ENCODE measurements at regions of chr1 and their contacts with region 1.

Region 1: DNA sequence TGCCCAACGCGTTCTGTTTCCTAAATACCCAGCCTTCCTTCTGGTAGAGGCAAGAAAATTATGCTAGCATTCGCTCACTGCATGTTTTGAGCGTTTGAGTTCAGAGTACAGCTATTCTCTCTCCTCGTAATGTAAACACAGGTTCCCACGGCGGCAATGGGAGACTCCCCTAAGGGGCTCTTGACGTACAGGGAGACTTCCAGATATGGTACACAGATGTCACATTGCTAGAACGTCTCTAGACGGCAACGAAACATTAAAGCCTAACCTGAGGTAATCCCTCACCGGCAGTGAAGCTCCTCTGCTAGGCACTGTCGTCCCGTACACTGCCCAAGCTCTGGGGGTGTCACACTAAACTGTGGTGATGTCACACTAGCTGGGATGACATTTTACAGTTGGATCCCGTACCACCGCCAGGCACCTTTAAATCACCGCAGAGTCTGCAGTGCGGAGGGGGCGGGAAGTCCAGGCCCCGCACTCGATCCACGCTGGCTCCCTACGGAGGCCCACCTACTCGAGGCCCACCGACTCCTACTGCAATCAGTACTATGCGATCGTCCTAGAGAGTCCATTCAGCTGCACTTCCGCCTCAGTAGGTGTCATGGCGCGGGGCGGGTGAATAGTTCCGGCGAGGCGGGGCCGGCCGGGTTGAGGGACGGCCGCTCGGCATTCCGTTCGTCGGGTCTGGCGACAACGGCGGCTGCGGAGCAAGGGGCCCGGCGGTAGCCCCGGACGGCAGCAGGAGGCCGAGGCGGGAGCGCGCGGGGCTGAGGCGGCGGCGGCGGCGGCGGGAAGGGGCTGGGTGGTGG is at the start of gene HIPK1:
- DNase-seq: peak; percentile 95
- ATAC-seq: peak; percentile 68
- H3K4me3 Mint-ChIP-seq: peak within 1 kb of the TSS; percentile 90
- H3K27ac Mint-ChIP-seq: peak within 1 kb of the TSS; percentile 100
- H3K4me1 Mint-ChIP-seq: peaks cover 33% of the 10 kb centered on the region
- H3K27me3 Mint-ChIP-seq: no peaks in the 10 kb centered on the region
- CTCF ChIP-seq: no peak
- total RNA-seq, gene HIPK1: 42.8 to 45.1 TPM

Region 2: DNA sequence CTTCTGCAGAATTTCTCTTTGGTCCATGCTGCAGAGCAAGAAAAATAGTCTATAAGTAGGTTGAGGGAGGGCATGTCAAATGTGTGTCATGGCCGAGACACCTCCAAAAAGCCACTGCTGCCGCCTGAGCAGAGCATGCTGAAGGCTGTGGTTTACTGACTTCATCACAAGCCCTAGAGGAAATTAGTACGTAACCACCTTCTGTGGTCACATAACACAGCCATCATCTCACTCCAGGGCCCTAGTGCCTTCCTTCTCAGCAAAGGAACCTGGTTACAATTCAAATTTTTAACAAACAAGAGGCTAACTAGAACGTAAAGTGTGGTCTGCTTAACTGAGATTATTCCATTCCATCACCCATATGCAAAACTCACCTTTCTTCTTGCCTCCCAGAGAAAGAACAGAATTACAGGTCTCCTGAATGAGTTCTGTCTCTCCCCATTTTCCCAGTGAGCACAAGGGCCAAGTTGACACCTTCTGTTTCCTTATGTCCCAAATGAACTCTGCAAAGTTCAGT is 57.5 kb before region 1 on chr1 and contains the start of gene PTPN22:
- CTCF ChIA-PET with region 1: interaction called, 7 read pairs
- POLR2A ChIA-PET with region 1: interaction called, 34 read pairs
- intact Hi-C with region 1: loop called (anchors 5 kb)
- DNase-seq: peak; percentile 91
- ATAC-seq: peak; percentile 79
- H3K4me3 Mint-ChIP-seq: peak within 1 kb of the TSS; percentile 91
- H3K27ac Mint-ChIP-seq: peak within 1 kb of the TSS; percentile 98
- H3K4me1 Mint-ChIP-seq: peaks cover 61% of the 10 kb centered on the region
- H3K27me3 Mint-ChIP-seq: no peaks in the 10 kb centered on the region
- CTCF ChIP-seq: no peak
- total RNA-seq, gene PTPN22: 54.0 to 56.0 TPM

Region 3: GRCh38 chr1:113904674-113905434 is 24.3 kb before region 1 on chr1 and contains the starts of genes AP4B1 and DCLRE1B:
- CTCF ChIA-PET with region 1: interaction called, 55 read pairs
- POLR2A ChIA-PET with region 1: interaction called, 93 read pairs
- intact Hi-C with region 1: loop called (anchors 1 kb)
- DNase-seq: peak; percentile 99
- ATAC-seq: peak; percentile 93
- H3K4me3 Mint-ChIP-seq: peak within 1 kb of the TSS; percentile 88
- H3K27ac Mint-ChIP-seq: peak within 1 kb of the TSS; percentile 99
- H3K4me1 Mint-ChIP-seq: peaks cover 51% of the 10 kb centered on the region
- H3K27me3 Mint-ChIP-seq: no peaks in the 10 kb centered on the region
- CTCF ChIP-seq: no peak
- total RNA-seq, gene AP4B1: 38.2 to 38.5 TPM
- total RNA-seq, gene DCLRE1B: 19.1 to 19.3 TPM

Region 4: DNA sequence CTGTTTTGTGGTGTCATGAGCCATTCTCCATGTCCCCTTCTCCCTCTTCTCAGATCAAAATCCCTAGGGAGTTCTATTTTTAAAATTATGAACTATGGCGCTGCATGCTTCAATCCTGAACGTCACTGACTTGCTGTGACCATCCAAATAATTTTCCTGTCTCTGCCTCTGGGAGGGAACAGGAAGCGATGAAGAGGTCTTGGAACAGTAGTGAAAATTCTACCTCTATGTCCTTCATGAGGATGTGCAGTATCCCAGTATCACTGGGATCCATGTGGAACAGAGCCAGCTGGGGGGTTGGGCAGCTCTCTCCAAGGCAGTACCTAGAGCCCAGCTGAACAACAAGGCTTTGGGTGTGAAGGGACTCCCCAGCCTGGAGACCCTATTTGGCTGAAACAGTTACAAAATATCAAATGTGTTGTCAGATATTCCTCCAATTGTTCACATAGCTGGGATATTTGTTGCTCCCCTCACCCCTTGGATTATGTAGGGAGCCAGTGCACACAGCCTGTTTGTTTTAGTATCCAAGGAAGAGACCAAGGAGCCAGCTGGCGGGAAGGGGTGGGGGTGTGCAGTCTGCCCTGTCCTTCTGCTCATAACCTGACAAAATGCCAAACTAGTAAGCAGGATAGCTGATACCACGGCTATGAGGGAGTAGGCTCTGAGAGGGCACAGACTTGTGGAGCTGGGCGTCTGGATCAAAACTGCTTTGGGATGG is 16.4 kb before region 1 on chr1:
- CTCF ChIA-PET with region 1: interaction called, 55 read pairs
- POLR2A ChIA-PET with region 1: interaction called, 8 read pairs
- intact Hi-C with region 1: no loop called
- DNase-seq: no peak
- ATAC-seq: no peak
- H3K4me3 Mint-ChIP-seq: no peak overlapping the region
- H3K27ac Mint-ChIP-seq: no peak overlapping the region
- H3K4me1 Mint-ChIP-seq: peaks cover 9% of the 10 kb centered on the region
- H3K27me3 Mint-ChIP-seq: no peaks in the 10 kb centered on the region
- CTCF ChIP-seq: no peak

Region 5: DNA sequence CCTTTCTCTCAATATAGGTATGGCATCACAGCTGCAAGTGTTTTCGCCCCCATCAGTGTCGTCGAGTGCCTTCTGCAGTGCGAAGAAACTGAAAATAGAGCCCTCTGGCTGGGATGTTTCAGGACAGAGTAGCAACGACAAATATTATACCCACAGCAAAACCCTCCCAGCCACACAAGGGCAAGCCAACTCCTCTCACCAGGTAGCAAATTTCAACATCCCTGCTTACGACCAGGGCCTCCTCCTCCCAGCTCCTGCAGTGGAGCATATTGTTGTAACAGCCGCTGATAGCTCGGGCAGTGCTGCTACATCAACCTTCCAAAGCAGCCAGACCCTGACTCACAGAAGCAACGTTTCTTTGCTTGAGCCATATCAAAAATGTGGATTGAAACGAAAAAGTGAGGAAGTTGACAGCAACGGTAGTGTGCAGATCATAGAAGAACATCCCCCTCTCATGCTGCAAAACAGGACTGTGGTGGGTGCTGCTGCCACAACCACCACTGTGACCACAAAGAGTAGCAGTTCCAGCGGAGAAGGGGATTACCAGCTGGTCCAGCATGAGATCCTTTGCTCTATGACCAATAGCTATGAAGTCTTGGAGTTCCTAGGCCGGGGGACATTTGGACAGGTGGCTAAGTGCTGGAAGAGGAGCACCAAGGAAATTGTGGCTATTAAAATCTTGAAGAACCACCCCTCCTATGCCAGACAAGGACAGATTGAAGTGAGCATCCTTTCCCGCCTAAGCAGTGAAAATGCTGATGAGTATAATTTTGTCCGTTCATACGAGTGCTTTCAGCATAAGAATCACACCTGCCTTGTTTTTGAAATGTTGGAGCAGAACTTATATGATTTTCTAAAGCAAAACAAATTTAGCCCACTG is 11.5 kb after region 1 on chr1:
- CTCF ChIA-PET with region 1: interaction called, 57 read pairs
- POLR2A ChIA-PET with region 1: interaction called, 60 read pairs
- intact Hi-C with region 1: no loop called
- DNase-seq: peak; percentile 85
- ATAC-seq: peak; percentile 71
- H3K4me3 Mint-ChIP-seq: peak overlapping the region; percentile 73
- H3K27ac Mint-ChIP-seq: peak overlapping the region; percentile 95
- H3K4me1 Mint-ChIP-seq: peaks cover 75% of the 10 kb centered on the region
- H3K27me3 Mint-ChIP-seq: no peaks in the 10 kb centered on the region
- CTCF ChIP-seq: no peak

Region 6: DNA sequence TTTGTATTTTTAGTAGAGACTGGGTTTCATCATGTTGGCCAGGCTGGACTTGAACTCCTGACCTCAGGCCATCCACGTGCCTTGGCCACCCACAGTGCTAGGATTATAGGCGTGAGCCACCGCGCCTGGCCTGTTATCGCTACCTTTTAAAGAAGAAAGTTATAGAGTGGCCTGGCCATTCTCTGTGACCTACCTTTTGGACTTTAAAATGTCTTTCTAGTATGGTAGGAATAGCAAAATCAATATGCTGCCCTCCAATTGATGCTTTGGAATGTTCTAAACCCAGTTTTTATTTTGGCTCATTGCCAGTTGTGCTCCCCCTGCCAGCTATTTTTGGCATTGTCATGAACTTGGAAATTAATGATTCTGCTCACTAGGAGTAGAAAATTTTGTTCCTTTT is 19.9 kb after region 1 on chr1:
- CTCF ChIA-PET with region 1: interaction called, 57 read pairs
- POLR2A ChIA-PET with region 1: interaction called, 60 read pairs
- intact Hi-C with region 1: loop called (anchors 2 kb)
- DNase-seq: no peak
- ATAC-seq: no peak
- H3K4me3 Mint-ChIP-seq: no peak overlapping the region
- H3K27ac Mint-ChIP-seq: peak overlapping the region; percentile 88
- H3K4me1 Mint-ChIP-seq: peaks cover 74% of the 10 kb centered on the region
- H3K27me3 Mint-ChIP-seq: no peaks in the 10 kb centered on the region
- CTCF ChIP-seq: peak; percentile 43

Measured in activated CD8-positive, alpha-beta T cell treated with anti-CD3 and anti-CD28 coated beads for 36 hours (primary cell).